K562 (cell line): ENCODE measurements at regions of chr3 and their contacts with region 1.

Region 1: DNA sequence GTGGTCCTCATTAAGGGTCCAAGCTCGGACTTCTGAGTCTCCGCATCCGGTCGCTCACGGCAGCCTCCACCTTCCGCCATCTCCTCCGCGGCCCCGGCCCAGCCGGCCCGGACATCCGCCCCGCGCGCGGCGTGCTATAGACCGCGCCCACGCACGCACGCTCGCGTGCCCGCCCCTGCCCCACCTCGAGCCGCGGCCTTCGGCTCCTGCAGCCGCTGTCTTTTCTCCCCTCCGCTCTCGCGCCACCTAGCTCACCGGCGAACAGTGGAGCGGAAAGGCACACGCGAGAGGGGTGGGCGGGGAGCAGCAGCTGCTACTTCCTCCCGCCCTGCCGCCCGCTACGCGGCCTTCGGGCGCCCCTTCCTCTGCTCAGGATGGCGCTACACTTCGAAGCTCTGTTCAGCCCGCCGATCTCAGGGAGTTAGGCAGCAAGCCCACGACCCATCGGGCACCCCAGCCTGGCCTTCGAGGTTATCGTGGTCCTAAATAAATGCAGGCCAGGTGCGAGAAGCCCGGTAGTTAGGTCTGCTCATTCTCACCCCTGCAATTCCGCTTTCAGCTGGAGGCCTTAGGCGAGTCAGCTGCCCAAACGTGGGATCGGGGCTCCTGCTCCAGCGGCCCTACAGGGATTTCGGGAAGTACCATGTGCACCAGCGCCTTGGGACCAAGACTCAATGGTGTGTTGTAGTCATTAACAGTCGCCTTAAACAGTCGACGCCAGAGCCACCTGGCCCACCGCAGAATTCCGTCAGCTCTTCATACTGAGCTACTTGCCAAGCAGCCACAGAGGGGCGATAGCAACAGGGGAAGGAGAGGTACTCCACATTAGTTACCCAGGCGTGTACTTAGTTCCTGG is at the start of gene USP4:
- DNase-seq: peak; percentile 84 to 95 (median 88)
- ATAC-seq: peak; percentile 96
- H3K4me3 ChIP-seq: peak within 1 kb of the TSS; percentile 95
- H3K27ac ChIP-seq: peak within 1 kb of the TSS; percentile 88
- H3K4me1 ChIP-seq: peaks cover 6 to 18% of the 10 kb centered on the region in 2 experiments; a peak in 4 of 5 replicates
- H3K27me3 ChIP-seq: no peaks in the 10 kb centered on the region
- CTCF ChIP-seq: peak; percentile 62 to 75 (median 69)
- EP300 ChIP-seq: peak; percentile 12; the same call in 1 of the 2 replicates
- POLR2A ChIP-seq: peak; percentile 81
- RAD21 ChIP-seq: peak; percentile 64 to 80
- polyA plus RNA-seq, gene USP4: 15.4 to 22.9 TPM

Region 2: DNA sequence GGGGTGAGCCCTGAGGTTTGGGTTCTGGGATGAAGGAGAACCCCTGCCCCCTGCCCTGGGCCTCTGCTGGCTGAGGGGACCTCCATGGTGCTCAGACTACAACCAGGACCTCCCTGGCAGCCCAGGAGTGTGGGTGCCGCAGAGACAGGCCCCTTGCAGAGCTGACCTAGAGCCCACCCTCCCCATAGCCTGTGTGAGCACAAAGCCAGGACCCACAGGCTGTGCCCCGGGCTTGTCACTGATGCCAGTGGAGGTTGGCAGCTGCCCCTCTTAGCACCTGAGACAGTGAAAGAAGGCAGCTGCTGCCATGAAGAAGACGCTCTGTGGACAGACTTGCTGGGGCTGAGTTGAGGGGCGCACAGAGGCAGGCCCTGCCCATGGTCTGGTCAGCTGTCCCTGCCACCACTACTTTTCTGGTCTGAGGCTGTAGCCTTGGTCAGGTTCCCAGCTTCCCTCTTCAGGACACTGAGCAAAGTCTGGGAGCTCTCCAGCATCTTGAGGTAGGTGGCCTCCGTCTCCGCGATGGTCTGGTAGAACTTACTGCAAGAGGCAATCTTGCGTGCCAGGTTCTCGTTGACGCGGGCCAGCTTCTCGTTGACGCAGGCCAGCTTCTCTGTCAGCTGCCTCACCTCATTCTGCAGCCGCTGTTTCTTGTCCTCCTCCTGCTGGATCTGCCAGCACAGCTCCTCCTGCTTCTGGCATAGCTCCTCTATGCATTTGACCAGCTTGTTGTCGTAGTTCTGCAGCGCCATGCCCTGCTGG is 23.3 kb before region 1 on chr3:
- CTCF ChIA-PET with region 1: no interaction called
- POLR2A ChIA-PET with region 1: no interaction called
- in situ Hi-C with region 1: no loop called
- intact Hi-C with region 1: no loop called
- DNase-seq: no peak
- ATAC-seq: no peak
- H3K4me3 ChIP-seq: no peak overlapping the region
- H3K27ac ChIP-seq: no peak overlapping the region
- H3K4me1 ChIP-seq: no peaks in the 10 kb centered on the region; a peak in 1 of 5 replicates
- H3K27me3 ChIP-seq: no peaks in the 10 kb centered on the region
- CTCF ChIP-seq: no peak
- EP300 ChIP-seq: no peak
- POLR2A ChIP-seq: no peak
- RAD21 ChIP-seq: no peak

Region 3: GRCh38 chr3:49383387-49383786 is 43.2 kb after region 1 on chr3:
- CTCF ChIA-PET with region 1: no interaction called
- POLR2A ChIA-PET with region 1: no interaction called
- in situ Hi-C with region 1: no loop called
- intact Hi-C with region 1: loop called (anchors 5 kb)
- DNase-seq: no peak
- ATAC-seq: no peak
- H3K4me3 ChIP-seq: no peak overlapping the region
- H3K27ac ChIP-seq: no peak overlapping the region
- H3K4me1 ChIP-seq: peaks cover 4 to 15% of the 10 kb centered on the region in 2 experiments; a peak in 4 of 5 replicates
- H3K27me3 ChIP-seq: no peaks in the 10 kb centered on the region
- CTCF ChIP-seq: no peak
- EP300 ChIP-seq: no peak
- POLR2A ChIP-seq: no peak
- RAD21 ChIP-seq: no peak

Region 4: GRCh38 chr3:49411968-49412631 is 71.9 kb after region 1 on chr3 and contains the starts of genes RHOA and TCTA:
- CTCF ChIA-PET with region 1: no interaction called
- POLR2A ChIA-PET with region 1: interaction called, 8 read pairs
- in situ Hi-C with region 1: no loop called
- intact Hi-C with region 1: loop called (anchors 2 kb)
- DNase-seq: peak; percentile 95 to 99 (median 98)
- ATAC-seq: peak; percentile 91
- H3K4me3 ChIP-seq: peak within 1 kb of the TSS; percentile 91
- H3K27ac ChIP-seq: peak within 1 kb of the TSS; percentile 96
- H3K4me1 ChIP-seq: peaks cover 23 to 32% of the 10 kb centered on the region in 2 experiments; a peak in 4 of 5 replicates
- H3K27me3 ChIP-seq: no peaks in the 10 kb centered on the region
- CTCF ChIP-seq: no peak
- EP300 ChIP-seq: no peak
- POLR2A ChIP-seq: peak; percentile 97
- RAD21 ChIP-seq: no peak
- polyA plus RNA-seq, gene RHOA: 345 to 540 TPM
- polyA plus RNA-seq, gene TCTA: 4.0 to 4.2 TPM

Region 5: DNA sequence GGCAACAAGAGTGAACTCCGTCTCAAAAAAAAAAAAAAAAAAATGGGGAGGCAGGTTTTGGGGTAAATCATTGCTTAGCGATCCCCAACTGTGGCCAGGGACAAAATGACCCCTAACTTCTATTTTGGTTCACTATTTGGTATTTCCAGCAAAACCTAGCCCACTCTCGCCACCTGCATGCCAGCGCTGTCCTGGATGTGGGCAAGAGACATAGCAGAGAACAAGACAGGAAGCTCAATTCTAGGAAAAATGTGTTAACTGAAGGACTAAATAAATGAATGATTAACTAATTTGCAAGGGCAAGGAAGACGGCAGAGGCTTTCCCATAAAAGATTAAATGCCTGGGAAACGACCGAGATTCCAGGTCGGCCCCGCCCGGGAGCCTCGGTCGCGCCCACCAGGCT is 88.5 kb after region 1 on chr3:
- CTCF ChIA-PET with region 1: no interaction called
- POLR2A ChIA-PET with region 1: interaction called, 5 read pairs
- in situ Hi-C with region 1: no loop called
- intact Hi-C with region 1: loop called (anchors 5 kb)
- DNase-seq: no peak
- ATAC-seq: no peak
- H3K4me3 ChIP-seq: peak overlapping the region; percentile 58
- H3K27ac ChIP-seq: peak overlapping the region; percentile 88
- H3K4me1 ChIP-seq: peaks cover 0 to 21% of the 10 kb centered on the region in 2 experiments; a peak in 3 of 5 replicates
- H3K27me3 ChIP-seq: no peaks in the 10 kb centered on the region
- CTCF ChIP-seq: no peak
- EP300 ChIP-seq: no peak
- POLR2A ChIP-seq: no peak
- RAD21 ChIP-seq: no peak